ENCODE measurements at regions of chr1 and their contacts with region 1.

Region 1: DNA sequence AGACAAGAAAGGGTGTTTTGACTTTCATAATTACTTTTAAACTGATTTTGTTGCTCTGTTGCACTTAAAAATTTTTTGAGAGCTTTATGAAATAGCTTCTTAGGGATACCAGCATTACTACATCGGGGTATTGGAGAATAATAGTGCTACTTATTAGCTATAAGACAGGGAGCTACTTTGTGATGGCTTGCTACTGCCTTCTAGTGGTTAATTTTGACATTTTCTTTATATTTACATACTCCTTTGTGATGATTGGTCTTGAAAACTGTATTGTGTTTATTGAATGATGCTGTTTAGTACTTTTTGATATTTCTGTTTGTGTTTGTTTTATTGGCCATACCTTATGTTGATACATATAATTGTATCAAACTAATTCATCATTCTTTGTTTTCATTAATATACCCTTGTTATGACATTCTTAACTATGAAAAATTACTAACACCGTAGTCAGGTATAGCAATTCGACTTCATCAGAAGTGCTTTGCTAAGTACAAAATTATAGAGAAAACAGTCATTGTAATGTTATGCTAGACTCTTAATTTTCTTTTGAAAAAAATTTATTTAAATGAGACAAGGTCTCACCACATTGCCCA is 85.5 kb downstream of the CLIC4 start:
- DNase-seq: no peak
- H3K4me3 ChIP-seq: no peak overlapping the region
- H3K27ac ChIP-seq: no peak overlapping the region
- H3K4me1 ChIP-seq: peaks cover 3% of the 10 kb centered on the region
- H3K27me3 ChIP-seq: no peaks in the 10 kb centered on the region
- CTCF ChIP-seq: peak; percentile 57 to 81 (median 68)
- EP300 ChIP-seq: no peak
- POLR2A ChIP-seq: no peak

Region 2: DNA sequence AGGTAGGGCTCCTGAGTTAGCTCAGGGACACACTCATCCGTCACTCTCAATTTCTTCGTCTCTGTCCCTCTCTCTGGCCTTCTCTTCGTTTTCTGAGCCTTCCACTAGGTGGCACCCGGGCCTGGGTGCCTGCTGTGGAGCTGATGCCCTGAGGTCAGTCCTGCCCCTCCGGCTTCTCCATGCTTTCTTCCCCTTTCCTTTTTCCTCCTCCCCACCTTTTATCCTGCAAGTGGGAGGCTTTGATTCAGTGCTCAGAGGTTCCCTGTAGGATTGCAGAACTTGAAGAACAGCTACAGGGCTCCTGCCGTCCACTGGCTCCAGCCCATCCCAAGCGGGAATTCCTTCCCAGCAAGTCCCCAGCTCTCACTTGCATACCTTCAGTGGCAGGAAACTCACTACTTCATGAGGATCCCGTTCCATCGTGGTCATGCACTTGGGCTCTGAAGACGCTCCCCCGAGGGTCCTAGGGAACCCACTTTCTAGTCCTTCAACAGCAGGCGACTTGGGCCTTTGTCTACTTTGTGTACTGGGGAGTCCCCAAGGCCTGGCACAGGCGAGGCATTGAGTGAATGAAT is 142.1 kb before region 1 on chr1:
- intact Hi-C with region 1: loop called (anchors 2 to 5 kb)
- DNase-seq: peak; percentile 66 to 80 (median 73)
- H3K4me3 ChIP-seq: no peak overlapping the region
- H3K27ac ChIP-seq: no peak overlapping the region
- H3K4me1 ChIP-seq: no peaks in the 10 kb centered on the region
- H3K27me3 ChIP-seq: no peaks in the 10 kb centered on the region
- CTCF ChIP-seq: peak; percentile 72 to 79 (median 77)
- EP300 ChIP-seq: no peak
- POLR2A ChIP-seq: peak; percentile 21

Region 3: GRCh38 chr1:24694380-24694843 is 136.4 kb before region 1 on chr1:
- intact Hi-C with region 1: loop called (anchors 2 to 5 kb)
- DNase-seq: no peak
- H3K4me3 ChIP-seq: no peak overlapping the region
- H3K27ac ChIP-seq: no peak overlapping the region
- H3K4me1 ChIP-seq: peaks cover 2% of the 10 kb centered on the region
- H3K27me3 ChIP-seq: no peaks in the 10 kb centered on the region
- CTCF ChIP-seq: no peak
- EP300 ChIP-seq: no peak
- POLR2A ChIP-seq: no peak

Region 4: GRCh38 chr1:25134801-25135461 is 304.2 kb after region 1 on chr1:
- intact Hi-C with region 1: no loop called
- DNase-seq: no peak
- H3K4me3 ChIP-seq: no peak overlapping the region
- H3K27ac ChIP-seq: no peak overlapping the region
- H3K4me1 ChIP-seq: no peaks in the 10 kb centered on the region
- H3K27me3 ChIP-seq: no peaks in the 10 kb centered on the region
- CTCF ChIP-seq: no peak
- EP300 ChIP-seq: no peak
- POLR2A ChIP-seq: no peak

Region 5: GRCh38 chr1:25360596-25361581 is 530.1 kb after region 1 on chr1:
- intact Hi-C with region 1: no loop called
- DNase-seq: no peak
- H3K4me3 ChIP-seq: no peak overlapping the region
- H3K27ac ChIP-seq: peak overlapping the region in 1 of 2 donors; percentile 65
- H3K4me1 ChIP-seq: peaks cover 9% of the 10 kb centered on the region
- H3K27me3 ChIP-seq: no peaks in the 10 kb centered on the region
- CTCF ChIP-seq: no peak
- EP300 ChIP-seq: no peak
- POLR2A ChIP-seq: no peak

Measured in ovary (tissue), 10 donors.